ENCODE measurements at regions of chr9 and their contacts with region 1.

Region 1: DNA sequence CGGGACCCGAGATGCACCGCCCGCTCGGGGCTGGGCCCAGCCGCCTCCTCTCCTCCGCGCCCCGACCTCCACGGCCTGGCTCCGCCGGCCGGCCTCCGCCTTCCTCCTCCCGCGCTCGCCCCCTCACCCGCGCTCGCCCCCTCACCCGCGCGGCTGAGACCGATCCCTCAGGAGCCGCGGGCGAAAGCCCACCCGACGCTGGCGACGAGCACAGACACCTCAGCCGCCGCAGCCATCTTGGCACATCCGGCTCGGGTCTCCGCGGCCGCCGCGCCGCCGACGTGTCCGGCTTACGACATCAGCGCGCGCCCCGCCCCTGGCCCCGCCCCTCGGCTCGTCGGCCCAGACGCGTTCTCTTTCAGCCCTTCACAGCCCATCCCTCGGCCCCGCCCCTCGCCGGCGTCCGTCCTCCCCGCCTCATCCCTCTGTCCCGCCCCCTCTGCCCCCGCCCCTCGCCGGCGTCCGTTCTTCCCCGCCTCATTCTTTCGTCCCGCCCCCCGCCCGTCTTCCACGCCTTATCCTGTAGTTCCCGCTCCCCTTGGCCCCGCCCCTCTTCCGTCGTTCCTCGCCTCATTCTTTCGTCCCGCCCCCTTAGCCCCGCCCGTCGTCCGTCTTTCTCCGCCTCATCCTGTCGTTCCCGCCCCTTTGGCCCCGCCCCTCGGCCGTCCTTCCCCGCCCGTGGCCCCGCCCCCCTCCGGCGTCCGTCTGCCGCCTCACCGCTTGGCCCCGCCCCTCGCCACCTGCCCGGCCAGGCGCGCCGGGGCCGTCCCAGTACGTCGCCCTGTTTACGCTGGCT is at the start of gene SEC16A:
- DNase-seq: peak; percentile 99
- ATAC-seq: peak; percentile 82 to 87
- H3K4me3 ChIP-seq: peak within 1 kb of the TSS; percentile 70 to 87 (median 74)
- H3K27ac ChIP-seq: peak within 1 kb of the TSS; percentile 93 to 100 (median 98)
- H3K4me1 ChIP-seq: peaks cover 24 to 25% of the 10 kb centered on the region in 2 donors
- H3K27me3 ChIP-seq: no peaks in the 10 kb centered on the region
- CTCF ChIP-seq: no peak
- POLR2A ChIP-seq: peak; percentile 80 to 94
- total RNA-seq, gene SEC16A: 23.9 to 50.4 (median 46.6) TPM

Region 2: GRCh38 chr9:136410500-136411287 is 72.3 kb before region 1 on chr9 and contains the starts of genes ENTR1 and PMPCA:
- in situ Hi-C with region 1: no loop called
- intact Hi-C with region 1: loop called (anchors 1 kb)
- DNase-seq: peak; percentile 87
- ATAC-seq: peak; percentile 94 to 96
- H3K4me3 ChIP-seq: peak within 1 kb of the TSS; percentile 76 to 97 (median 82)
- H3K27ac ChIP-seq: peak within 1 kb of the TSS; percentile 81 to 93 (median 90)
- H3K4me1 ChIP-seq: peaks cover 16 to 25% of the 10 kb centered on the region in 2 donors
- H3K27me3 ChIP-seq: no peaks in the 10 kb centered on the region
- CTCF ChIP-seq: no peak
- POLR2A ChIP-seq: peak; percentile 83 to 94
- total RNA-seq, gene ENTR1: 23.2 to 43.5 (median 36.5) TPM
- total RNA-seq, gene PMPCA: 35.9 to 63.1 (median 42.7) TPM

Region 3: DNA sequence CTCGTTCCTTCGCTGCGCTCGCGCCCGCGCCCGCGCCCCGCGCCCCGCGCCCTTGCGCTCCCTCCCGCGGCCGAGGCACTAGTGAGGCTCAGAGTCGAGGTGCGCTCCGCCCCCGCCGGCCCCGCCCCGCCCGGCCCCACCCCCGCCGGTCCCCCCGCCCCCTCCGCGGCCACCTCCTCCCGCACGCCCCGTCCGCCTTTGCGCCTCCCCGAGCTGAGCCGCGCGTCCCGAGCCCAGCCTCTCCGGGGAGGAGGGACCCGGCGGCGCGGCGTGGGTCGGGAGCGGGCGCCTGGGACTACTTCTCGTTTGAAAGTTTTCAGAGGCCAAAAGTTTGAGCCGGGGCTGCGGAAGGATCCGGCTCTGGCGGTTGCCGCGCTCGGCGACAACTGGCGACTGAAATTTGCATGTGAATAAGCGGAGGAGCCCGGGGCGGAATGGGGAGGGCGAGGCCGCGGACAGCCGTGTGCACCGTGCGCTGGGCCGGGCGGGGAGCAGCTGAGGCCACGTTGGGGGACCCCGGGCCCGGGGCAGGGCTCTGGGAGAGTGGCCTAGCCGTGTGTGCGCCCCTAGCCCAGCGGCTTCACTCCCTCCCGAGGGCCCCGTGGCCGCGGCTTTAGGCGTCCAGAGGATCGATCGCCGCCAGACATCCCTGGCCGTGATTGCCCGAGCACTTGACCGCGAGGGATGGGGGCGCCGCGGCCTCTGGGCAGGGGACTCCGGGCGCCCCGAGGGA is 63.1 kb after region 1 on chr9 and contains the start of gene NOTCH1:
- in situ Hi-C with region 1: no loop called
- intact Hi-C with region 1: loop called (anchors 2 kb)
- DNase-seq: peak; percentile 78 to 83
- ATAC-seq: peak; percentile 73 to 77
- H3K4me3 ChIP-seq: peak within 1 kb of the TSS; percentile 67 to 88 (median 76)
- H3K27ac ChIP-seq: peak within 1 kb of the TSS; percentile 91 to 96 (median 94)
- H3K4me1 ChIP-seq: peaks cover 17 to 20% of the 10 kb centered on the region in 2 donors
- H3K27me3 ChIP-seq: no peaks in the 10 kb centered on the region
- CTCF ChIP-seq: peak in 1 of 5 experiments; percentile 10
- POLR2A ChIP-seq: peak; percentile 81 to 86
- total RNA-seq, gene NOTCH1: 6.3 to 15.4 (median 8.2) TPM

Region 4: DNA sequence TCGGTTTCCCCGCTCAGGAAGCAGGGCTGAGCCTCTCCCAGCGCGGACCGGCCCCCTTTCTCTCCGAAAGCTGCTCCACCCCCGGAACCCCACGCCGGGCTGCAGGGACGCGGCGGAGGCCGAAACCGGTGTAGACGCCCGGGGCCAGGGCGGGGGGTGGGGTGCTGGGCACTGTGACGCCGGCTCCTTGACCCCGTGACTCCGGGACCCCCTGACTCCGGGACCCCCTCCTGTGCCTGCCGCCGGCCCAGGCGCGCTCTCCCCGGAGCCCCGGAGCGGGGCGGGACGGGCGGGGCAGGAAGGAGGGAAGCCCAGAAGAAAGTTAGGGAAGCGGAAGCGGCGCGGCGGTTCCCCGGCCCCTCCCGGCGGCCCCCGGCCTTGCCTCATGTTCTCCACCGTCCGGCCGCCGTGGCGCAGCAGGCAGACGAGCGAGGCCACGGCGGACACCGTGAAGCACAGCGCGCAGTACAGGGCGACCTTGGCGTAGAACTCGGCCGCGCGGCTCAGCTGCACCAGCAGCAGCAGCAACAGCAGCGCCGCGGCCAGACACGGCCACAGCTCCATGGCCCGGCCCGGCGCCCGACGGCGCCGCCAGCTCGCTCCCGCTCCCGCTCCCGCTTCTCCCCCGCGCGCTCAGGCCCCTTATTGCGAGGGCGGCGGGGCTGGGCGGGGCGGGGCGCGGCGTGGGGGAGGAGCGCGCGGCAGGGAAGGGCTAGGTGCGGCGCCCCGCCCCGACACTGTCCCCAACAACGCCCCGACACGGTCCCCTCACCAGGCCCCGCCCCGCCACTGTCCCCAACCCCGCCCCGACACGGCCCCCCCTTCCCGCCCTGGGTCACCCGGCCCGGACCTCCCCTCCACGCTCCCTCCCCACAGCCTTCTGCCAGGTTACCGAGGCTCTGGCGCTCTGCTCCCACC is 204.1 kb after region 1 on chr9 and contains the start of gene AGPAT2:
- in situ Hi-C with region 1: no loop called
- intact Hi-C with region 1: loop called (anchors 1 kb)
- DNase-seq: peak; percentile 79 to 80
- ATAC-seq: peak; percentile 40 to 55
- H3K4me3 ChIP-seq: peak within 1 kb of the TSS; percentile 81 to 98 (median 87)
- H3K27ac ChIP-seq: peak within 1 kb of the TSS; percentile 88 to 96 (median 94)
- H3K4me1 ChIP-seq: peaks cover 37 to 49% of the 10 kb centered on the region in 2 donors
- H3K27me3 ChIP-seq: no peaks in the 10 kb centered on the region
- CTCF ChIP-seq: peak in 1 of 5 experiments; percentile 17
- POLR2A ChIP-seq: peak; percentile 91 to 93
- total RNA-seq, gene AGPAT2: 19.0 to 77.4 (median 36.0) TPM

Region 5: GRCh38 chr9:137086531-137087408 is 603.8 kb after region 1 on chr9 and contains the start of gene MAN1B1:
- in situ Hi-C with region 1: no loop called
- intact Hi-C with region 1: loop called (anchors 5 kb)
- DNase-seq: peak; percentile 99
- ATAC-seq: peak; percentile 93 to 94
- H3K4me3 ChIP-seq: peak within 1 kb of the TSS; percentile 67 to 92 (median 78)
- H3K27ac ChIP-seq: peak within 1 kb of the TSS; percentile 91 to 96 (median 92)
- H3K4me1 ChIP-seq: peaks cover 18 to 21% of the 10 kb centered on the region in 2 donors
- H3K27me3 ChIP-seq: no peaks in the 10 kb centered on the region
- CTCF ChIP-seq: peak in 1 of 5 experiments; percentile 23
- POLR2A ChIP-seq: peak; percentile 82 to 83
- total RNA-seq, gene MAN1B1: 15.9 to 31.9 (median 21.1) TPM